ENCODE measurements at regions of chr1 and their contacts with region 1.

Region 1: GRCh38 chr1:181936768-181937581 is 124.5 kb downstream of the ZNF648 start:
- DNase-seq: peak; percentile 77 to 84
- H3K4me3 ChIP-seq: peak overlapping the region in 1 of 4 experiments; percentile 24; a peak in 1 of 8 replicates
- H3K27ac ChIP-seq: no peak overlapping the region
- H3K4me1 ChIP-seq: no peaks in the 10 kb centered on the region
- H3K27me3 ChIP-seq: no peaks in the 10 kb centered on the region
- CTCF ChIP-seq: peak; percentile 77 to 92 (median 90)
- EP300 ChIP-seq: no peak
- POLR2A ChIP-seq: no peak
- RAD21 ChIP-seq: peak; percentile 96 to 98

Region 2: GRCh38 chr1:181479137-181479745 is 457.7 kb before region 1 on chr1:
- CTCF ChIA-PET with region 1: interaction called, 105 read pairs
- POLR2A ChIA-PET with region 1: interaction called, 3 read pairs
- DNase-seq: peak in 1 of 2 experiments; percentile 53
- H3K4me3 ChIP-seq: no peak overlapping the region
- H3K27ac ChIP-seq: no peak overlapping the region
- H3K4me1 ChIP-seq: peaks cover 2 to 14% (median 8%) of the 10 kb centered on the region in 4 experiments; a peak in 6 of 7 replicates
- H3K27me3 ChIP-seq: peaks cover 19 to 38% (median 34%) of the 10 kb centered on the region in 4 experiments
- CTCF ChIP-seq: peak; percentile 85 to 94 (median 86)
- EP300 ChIP-seq: no peak
- POLR2A ChIP-seq: no peak
- RAD21 ChIP-seq: peak; percentile 95 to 96

Region 3: GRCh38 chr1:181704546-181704945 is 232.4 kb before region 1 on chr1:
- CTCF ChIA-PET with region 1: interaction called, 13 read pairs
- POLR2A ChIA-PET with region 1: no interaction called
- DNase-seq: no peak
- H3K4me3 ChIP-seq: no peak overlapping the region
- H3K27ac ChIP-seq: no peak overlapping the region
- H3K4me1 ChIP-seq: no peaks in the 10 kb centered on the region
- H3K27me3 ChIP-seq: no peaks in the 10 kb centered on the region
- CTCF ChIP-seq: no peak
- EP300 ChIP-seq: no peak
- POLR2A ChIP-seq: no peak
- RAD21 ChIP-seq: no peak

Region 4: GRCh38 chr1:181910905-181911304 is 26.1 kb before region 1 on chr1:
- CTCF ChIA-PET with region 1: interaction called, 54 read pairs
- POLR2A ChIA-PET with region 1: no interaction called
- DNase-seq: no peak
- H3K4me3 ChIP-seq: no peak overlapping the region
- H3K27ac ChIP-seq: no peak overlapping the region
- H3K4me1 ChIP-seq: no peaks in the 10 kb centered on the region
- H3K27me3 ChIP-seq: no peaks in the 10 kb centered on the region
- CTCF ChIP-seq: peak in 2 of 3 experiments; percentile 30 to 56; a peak in 2 of 4 replicates
- EP300 ChIP-seq: no peak
- POLR2A ChIP-seq: no peak
- RAD21 ChIP-seq: peak; percentile 26 to 41; a peak in 1 of 4 replicates

Region 5: GRCh38 chr1:182003953-182004586 is 67.1 kb after region 1 on chr1:
- CTCF ChIA-PET with region 1: interaction called, 18 read pairs
- POLR2A ChIA-PET with region 1: no interaction called
- DNase-seq: no peak
- H3K4me3 ChIP-seq: no peak overlapping the region
- H3K27ac ChIP-seq: no peak overlapping the region
- H3K4me1 ChIP-seq: peaks cover 0 to 4% (median 2%) of the 10 kb centered on the region in 4 experiments; a peak in 3 of 7 replicates
- H3K27me3 ChIP-seq: no peaks in the 10 kb centered on the region
- CTCF ChIP-seq: peak; percentile 7 to 51 (median 37); a peak in 2 of 4 replicates
- EP300 ChIP-seq: no peak
- POLR2A ChIP-seq: no peak
- RAD21 ChIP-seq: peak; percentile 13 to 36; a peak in 3 of 4 replicates

Region 6: GRCh38 chr1:182054698-182055326 is 117.8 kb after region 1 on chr1:
- CTCF ChIA-PET with region 1: interaction called, 31 read pairs
- POLR2A ChIA-PET with region 1: no interaction called
- DNase-seq: peak in 1 of 2 experiments; percentile 77
- H3K4me3 ChIP-seq: no peak overlapping the region
- H3K27ac ChIP-seq: no peak overlapping the region
- H3K4me1 ChIP-seq: no peaks in the 10 kb centered on the region; a peak in 1 of 7 replicates
- H3K27me3 ChIP-seq: peaks cover 0 to 13% (median 7%) of the 10 kb centered on the region in 4 experiments; a peak in 3 of 7 replicates
- CTCF ChIP-seq: peak in 2 of 3 experiments; percentile 55 to 74; a peak in 2 of 4 replicates
- EP300 ChIP-seq: no peak
- POLR2A ChIP-seq: no peak
- RAD21 ChIP-seq: peak; percentile 76 to 78

Region 7: GRCh38 chr1:182259229-182259872 is 322.4 kb after region 1 on chr1:
- CTCF ChIA-PET with region 1: no interaction called
- POLR2A ChIA-PET with region 1: no interaction called
- DNase-seq: no peak
- H3K4me3 ChIP-seq: no peak overlapping the region
- H3K27ac ChIP-seq: no peak overlapping the region
- H3K4me1 ChIP-seq: no peaks in the 10 kb centered on the region
- H3K27me3 ChIP-seq: no peaks in the 10 kb centered on the region
- CTCF ChIP-seq: no peak
- EP300 ChIP-seq: no peak
- POLR2A ChIP-seq: no peak
- RAD21 ChIP-seq: no peak

Measured in H1 (cell line).